IMR-90 (cell line): ENCODE measurements at regions of chr1 and their contacts with region 1.

Region 1: GRCh38 chr1:42146626-42147320 is 6.4 kb upstream of the GUCA2B start:
- DNase-seq: peak; percentile 45
- ATAC-seq: peak; percentile 90
- H3K4me3 ChIP-seq: no peak overlapping the region
- H3K27ac ChIP-seq: no peak overlapping the region
- H3K4me1 ChIP-seq: no peaks in the 10 kb centered on the region
- H3K27me3 ChIP-seq: peaks cover 56% of the 10 kb centered on the region
- CTCF ChIP-seq: peak; percentile 83
- POLR2A ChIP-seq: no peak
- RAD21 ChIP-seq: peak; percentile 89

Region 2: DNA sequence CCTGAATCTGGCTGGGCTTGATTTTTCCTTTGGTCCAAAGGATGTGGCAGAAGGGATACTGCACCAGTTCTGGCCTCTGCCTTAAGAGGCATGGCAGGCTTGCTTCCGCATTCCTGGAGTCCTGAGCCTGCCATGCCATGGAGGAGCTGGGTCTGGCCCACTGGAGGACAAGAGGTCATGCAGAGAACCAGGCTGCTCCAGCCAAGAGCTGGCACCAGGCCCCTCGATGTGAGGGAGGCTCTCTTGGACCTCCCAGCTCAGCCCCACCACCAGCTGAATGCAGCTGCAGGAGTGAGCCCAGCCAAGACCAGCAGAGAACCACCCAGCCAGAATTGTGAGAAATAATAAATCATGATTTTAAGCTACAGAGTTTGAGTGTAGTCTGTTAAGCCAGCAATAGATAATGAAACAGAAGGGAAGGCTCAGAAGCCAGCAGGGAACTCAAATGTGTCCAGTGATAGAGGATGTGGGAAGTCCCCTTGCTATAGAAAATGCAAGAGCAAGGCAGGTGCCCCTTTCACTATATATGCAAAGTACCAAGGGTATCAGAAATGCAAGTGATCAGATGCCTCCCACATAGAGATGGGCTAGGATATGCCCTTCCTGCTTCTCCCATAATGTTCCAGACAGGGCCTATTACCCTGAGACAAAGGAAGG is 346.4 kb before region 1 on chr1:
- CTCF ChIA-PET with region 1: no interaction called
- POLR2A ChIA-PET with region 1: no interaction called
- dilution Hi-C with region 1: no loop called
- in situ Hi-C with region 1: no loop called
- intact Hi-C with region 1: no loop called
- DNase-seq: no peak
- ATAC-seq: no peak; the same call in 1 of the 2 replicates
- H3K4me3 ChIP-seq: no peak overlapping the region
- H3K27ac ChIP-seq: no peak overlapping the region
- H3K4me1 ChIP-seq: no peaks in the 10 kb centered on the region; the same call in 1 of the 2 replicates
- H3K27me3 ChIP-seq: peaks cover 4% of the 10 kb centered on the region; the same call in 1 of the 2 replicates
- CTCF ChIP-seq: no peak
- POLR2A ChIP-seq: no peak
- RAD21 ChIP-seq: no peak

Region 3: DNA sequence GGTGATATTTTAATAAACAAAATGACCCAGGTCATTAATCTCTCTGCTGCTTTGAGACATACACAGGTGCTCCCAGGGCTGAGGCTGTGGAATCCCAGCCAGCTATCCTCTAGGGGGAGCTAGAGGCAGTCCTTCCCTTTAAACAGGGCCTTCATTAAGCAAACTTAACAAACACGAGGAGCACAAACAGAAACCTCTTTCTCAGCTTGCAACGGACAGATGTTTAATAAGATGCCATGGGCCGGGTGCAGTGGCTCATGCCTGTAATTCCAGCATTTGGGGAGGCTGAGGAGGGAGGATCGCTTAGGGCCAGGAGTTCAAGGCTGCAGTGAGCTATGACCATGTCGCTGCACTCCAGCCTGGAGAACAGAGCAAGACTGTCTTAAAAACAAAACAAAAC is 334.7 kb before region 1 on chr1:
- CTCF ChIA-PET with region 1: no interaction called
- POLR2A ChIA-PET with region 1: no interaction called
- dilution Hi-C with region 1: no loop called
- in situ Hi-C with region 1: no loop called
- intact Hi-C with region 1: loop called (anchors 10 kb)
- DNase-seq: peak; percentile 78
- ATAC-seq: peak; percentile 80
- H3K4me3 ChIP-seq: no peak overlapping the region
- H3K27ac ChIP-seq: peak overlapping the region; percentile 96
- H3K4me1 ChIP-seq: peaks cover 10% of the 10 kb centered on the region
- H3K27me3 ChIP-seq: no peaks in the 10 kb centered on the region
- CTCF ChIP-seq: peak; percentile 71
- POLR2A ChIP-seq: no peak
- RAD21 ChIP-seq: peak; percentile 81

Region 4: GRCh38 chr1:42109600-42109999 is 37.2 kb before region 1 on chr1:
- CTCF ChIA-PET with region 1: no interaction called
- POLR2A ChIA-PET with region 1: no interaction called
- dilution Hi-C with region 1: no loop called
- in situ Hi-C with region 1: no loop called
- intact Hi-C with region 1: no loop called
- DNase-seq: no peak
- ATAC-seq: no peak
- H3K4me3 ChIP-seq: no peak overlapping the region
- H3K27ac ChIP-seq: no peak overlapping the region
- H3K4me1 ChIP-seq: no peaks in the 10 kb centered on the region
- H3K27me3 ChIP-seq: peaks cover 2% of the 10 kb centered on the region
- CTCF ChIP-seq: no peak
- POLR2A ChIP-seq: no peak
- RAD21 ChIP-seq: no peak

Region 5: DNA sequence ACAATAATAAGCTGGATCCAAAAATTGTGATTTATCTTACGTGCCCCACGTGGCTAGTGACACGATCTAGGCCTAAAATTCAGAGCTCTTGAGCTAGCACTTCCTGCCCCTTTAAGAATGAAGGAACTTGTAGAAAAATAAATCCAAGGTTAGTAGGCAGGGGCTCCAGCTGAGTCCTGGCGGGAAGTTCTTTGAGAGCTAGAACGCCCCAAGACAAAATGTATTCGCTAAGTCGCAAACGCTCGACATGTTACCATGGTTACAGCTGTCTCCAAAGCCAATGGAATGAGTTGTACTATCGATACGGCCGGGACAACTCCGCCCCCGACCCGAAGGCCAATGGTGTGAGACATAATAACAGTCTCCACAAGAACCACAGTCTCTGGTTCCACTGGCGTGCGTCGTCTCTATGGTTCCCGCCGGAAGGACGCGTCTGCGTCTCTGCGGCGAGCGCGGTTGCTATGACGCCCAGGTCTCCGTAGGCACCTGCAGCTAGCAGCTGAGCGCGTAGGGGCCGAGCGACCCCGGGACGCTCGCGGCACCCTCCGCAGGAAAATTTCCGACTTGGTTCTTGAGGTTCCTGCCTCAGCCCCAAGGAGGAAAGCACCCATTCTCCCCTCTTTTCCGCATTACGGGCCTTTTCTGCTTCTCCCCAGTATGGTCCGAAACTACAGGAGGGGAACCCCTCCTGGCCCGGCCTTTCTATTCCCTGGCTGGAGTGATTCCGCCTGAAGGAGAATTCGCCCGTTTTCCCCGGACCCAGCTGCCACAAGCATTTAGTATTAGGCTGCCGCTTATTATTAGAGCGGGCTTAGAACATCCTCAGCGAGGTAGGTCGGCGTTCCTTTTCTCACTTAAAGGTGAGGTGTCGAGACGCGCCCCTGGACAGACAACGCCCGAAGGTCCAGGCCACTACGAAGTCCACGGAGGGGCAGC is 316.3 kb after region 1 on chr1 and contains the start of gene CCDC30:
- CTCF ChIA-PET with region 1: no interaction called
- POLR2A ChIA-PET with region 1: no interaction called
- dilution Hi-C with region 1: no loop called
- in situ Hi-C with region 1: no loop called
- intact Hi-C with region 1: loop called (anchors 2 kb)
- DNase-seq: peak; percentile 98
- ATAC-seq: peak; percentile 100
- H3K4me3 ChIP-seq: peak within 1 kb of the TSS; percentile 61
- H3K27ac ChIP-seq: no peak within 1 kb of the TSS
- H3K4me1 ChIP-seq: no peaks in the 10 kb centered on the region
- H3K27me3 ChIP-seq: peaks cover under 1% of the 10 kb centered on the region; the same call in 1 of the 2 replicates
- CTCF ChIP-seq: no peak
- POLR2A ChIP-seq: no peak
- RAD21 ChIP-seq: no peak
- total RNA-seq, gene CCDC30: under 0.01 and 0.18 TPM in 2 replicates

Region 6: DNA sequence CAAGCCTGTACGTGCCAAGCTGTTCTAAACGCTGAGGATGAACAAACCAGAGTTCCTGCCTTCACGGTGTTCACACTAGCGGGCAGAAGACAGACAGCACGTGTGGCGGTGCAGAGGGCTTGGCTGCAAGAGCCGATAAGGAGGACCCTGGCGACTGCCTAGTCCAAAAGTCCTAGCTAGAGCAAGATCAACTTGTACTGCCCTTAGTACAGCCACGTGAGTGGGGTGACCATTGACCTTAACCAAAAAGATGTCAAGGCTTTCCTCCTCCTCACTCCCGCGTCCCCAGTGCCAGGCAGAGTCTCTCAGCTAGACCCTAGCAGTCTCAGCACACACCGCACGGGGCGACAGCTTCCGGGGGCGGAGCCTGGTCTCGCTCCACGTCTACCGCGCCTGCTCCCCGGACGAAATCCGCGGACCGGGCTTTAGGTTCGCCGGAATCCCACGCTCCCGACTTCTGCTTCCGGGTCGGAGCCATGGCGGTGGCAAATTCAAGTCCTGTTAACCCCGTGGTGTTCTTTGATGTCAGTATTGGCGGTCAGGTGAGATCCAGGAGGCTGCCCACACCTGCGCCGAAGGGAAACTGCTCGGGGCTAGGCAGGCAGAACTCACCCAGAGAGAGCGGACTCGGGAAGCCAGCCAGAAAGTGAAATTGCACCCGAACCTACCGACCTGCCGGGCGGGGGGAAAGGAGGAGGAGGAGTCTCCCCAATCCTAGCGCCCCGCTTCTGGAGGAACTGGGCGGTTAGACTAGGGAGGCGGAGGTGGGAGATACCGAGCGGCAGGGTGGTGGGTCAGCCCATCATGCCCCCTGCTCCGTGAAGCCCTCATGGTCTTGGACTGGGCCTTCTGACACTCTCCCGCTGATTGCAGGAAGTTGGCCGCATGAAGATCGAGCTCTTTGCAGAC is 511.5 kb after region 1 on chr1 and contains the start of gene PPIH:
- CTCF ChIA-PET with region 1: no interaction called
- POLR2A ChIA-PET with region 1: no interaction called
- dilution Hi-C with region 1: no loop called
- in situ Hi-C with region 1: no loop called
- intact Hi-C with region 1: loop called (anchors 10 kb)
- DNase-seq: peak; percentile 88
- ATAC-seq: peak; percentile 100
- H3K4me3 ChIP-seq: peak within 1 kb of the TSS; percentile 55
- H3K27ac ChIP-seq: peak within 1 kb of the TSS; percentile 60
- H3K4me1 ChIP-seq: no peaks in the 10 kb centered on the region
- H3K27me3 ChIP-seq: peaks cover 2% of the 10 kb centered on the region; the same call in 1 of the 2 replicates
- CTCF ChIP-seq: peak; percentile 24; the same call in 1 of the 2 replicates
- POLR2A ChIP-seq: peak; percentile 39; the same call in 1 of the 2 replicates
- RAD21 ChIP-seq: 0 out of 2 replicates have a peak, but pooled peaks have one; percentile 2
- total RNA-seq, gene PPIH: 22.4 and 36.1 TPM in 2 replicates

Region 7: GRCh38 chr1:42756956-42757891 is 610.5 kb after region 1 on chr1:
- CTCF ChIA-PET with region 1: no interaction called
- POLR2A ChIA-PET with region 1: no interaction called
- dilution Hi-C with region 1: no loop called
- in situ Hi-C with region 1: no loop called
- intact Hi-C with region 1: loop called (anchors 5 kb)
- DNase-seq: peak; percentile 72
- ATAC-seq: peak; percentile 79
- H3K4me3 ChIP-seq: no peak overlapping the region
- H3K27ac ChIP-seq: no peak overlapping the region
- H3K4me1 ChIP-seq: peaks cover 3% of the 10 kb centered on the region
- H3K27me3 ChIP-seq: no peaks in the 10 kb centered on the region
- CTCF ChIP-seq: peak; percentile 62
- POLR2A ChIP-seq: no peak
- RAD21 ChIP-seq: peak; percentile 49

Region 8: GRCh38 chr1:42913426-42914091 is 766.8 kb after region 1 on chr1:
- CTCF ChIA-PET with region 1: no interaction called
- POLR2A ChIA-PET with region 1: no interaction called
- dilution Hi-C with region 1: no loop called
- in situ Hi-C with region 1: no loop called
- intact Hi-C with region 1: no loop called
- DNase-seq: peak; percentile 82
- ATAC-seq: peak; percentile 98
- H3K4me3 ChIP-seq: no peak overlapping the region
- H3K27ac ChIP-seq: no peak overlapping the region
- H3K4me1 ChIP-seq: no peaks in the 10 kb centered on the region
- H3K27me3 ChIP-seq: peaks cover 3% of the 10 kb centered on the region
- CTCF ChIP-seq: peak; percentile 77
- POLR2A ChIP-seq: no peak
- RAD21 ChIP-seq: peak; percentile 92